ENCODE measurements at regions of chr5 and their contacts with region 1.

Region 1: GRCh38 chr5:57221049-57221568 is 47.2 kb downstream of the GPBP1 start:
- DNase-seq: peak in 1 of 2 donors; percentile 87
- ATAC-seq: peak; percentile 78 to 90 (median 87)
- H3K4me3 ChIP-seq: no peak overlapping the region
- H3K4me3 Mint-ChIP-seq: peak overlapping the region; percentile 56
- H3K27ac ChIP-seq: no peak overlapping the region
- H3K27ac Mint-ChIP-seq: peak overlapping the region; percentile 81 to 89
- H3K4me1 ChIP-seq: no peaks in the 10 kb centered on the region
- H3K4me1 Mint-ChIP-seq: peaks cover 26 to 28% of the 10 kb centered on the region in 2 donors
- H3K27me3 ChIP-seq: no peaks in the 10 kb centered on the region
- H3K27me3 Mint-ChIP-seq: no peaks in the 10 kb centered on the region
- CTCF ChIP-seq: peak; percentile 93

Region 2: GRCh38 chr5:56951946-56952691 is 269.0 kb before region 1 on chr5 and contains the start of gene MIER3:
- intact Hi-C with region 1: loop called (anchors 5 kb)
- DNase-seq: peak; percentile 80 to 86
- ATAC-seq: peak; percentile 94 to 97 (median 96)
- H3K4me3 ChIP-seq: peak within 1 kb of the TSS; percentile 56
- H3K4me3 Mint-ChIP-seq: peak within 1 kb of the TSS; percentile 87
- H3K27ac ChIP-seq: peak within 1 kb of the TSS; percentile 8
- H3K27ac Mint-ChIP-seq: peak within 1 kb of the TSS; percentile 74 to 80
- H3K4me1 ChIP-seq: peaks cover 13% of the 10 kb centered on the region
- H3K4me1 Mint-ChIP-seq: peaks cover 28 to 30% of the 10 kb centered on the region in 2 donors
- H3K27me3 ChIP-seq: peaks cover 15% of the 10 kb centered on the region
- H3K27me3 Mint-ChIP-seq: peaks cover 15 to 25% of the 10 kb centered on the region in 2 donors
- CTCF ChIP-seq: no peak
- total RNA-seq, gene MIER3: 20.4 to 30.8 (median 29.0) TPM

Region 3: GRCh38 chr5:57137401-57137800 is 83.7 kb before region 1 on chr5:
- intact Hi-C with region 1: loop called (anchors 2 kb)
- DNase-seq: no peak
- ATAC-seq: no peak
- H3K4me3 ChIP-seq: no peak overlapping the region
- H3K4me3 Mint-ChIP-seq: no peak overlapping the region
- H3K27ac ChIP-seq: no peak overlapping the region
- H3K27ac Mint-ChIP-seq: no peak overlapping the region
- H3K4me1 ChIP-seq: no peaks in the 10 kb centered on the region
- H3K4me1 Mint-ChIP-seq: no peaks in the 10 kb centered on the region
- H3K27me3 ChIP-seq: no peaks in the 10 kb centered on the region
- H3K27me3 Mint-ChIP-seq: peaks cover 0 to 5% of the 10 kb centered on the region in 2 donors
- CTCF ChIP-seq: no peak

Region 4: DNA sequence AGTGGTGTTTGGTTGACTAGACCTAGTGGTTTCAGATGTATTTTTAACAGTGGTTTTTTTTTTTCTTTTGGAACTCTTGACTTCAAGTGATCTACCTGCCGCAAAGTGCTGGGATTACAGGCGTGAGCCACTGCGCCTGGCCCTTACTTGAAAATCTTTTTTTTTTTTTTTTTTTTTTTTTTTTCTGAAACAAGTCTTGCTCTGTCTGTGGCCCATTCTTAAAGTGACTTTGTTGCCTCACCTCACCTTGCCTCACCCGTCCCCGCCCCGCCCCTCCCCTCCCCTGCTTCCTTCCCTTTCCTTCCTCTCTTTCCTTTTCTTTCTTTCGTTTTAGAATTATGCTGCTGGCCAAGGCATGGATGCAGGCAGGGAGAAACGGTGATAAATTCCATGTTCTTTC is 21.2 kb before region 1 on chr5:
- intact Hi-C with region 1: no loop called
- DNase-seq: no peak
- ATAC-seq: peak in 1 of 3 donors; percentile 7
- H3K4me3 ChIP-seq: no peak overlapping the region
- H3K4me3 Mint-ChIP-seq: peak overlapping the region; percentile 22
- H3K27ac ChIP-seq: no peak overlapping the region
- H3K27ac Mint-ChIP-seq: peak overlapping the region; percentile 10 to 56
- H3K4me1 ChIP-seq: peaks cover 21% of the 10 kb centered on the region
- H3K4me1 Mint-ChIP-seq: peaks cover 58 to 59% of the 10 kb centered on the region in 2 donors
- H3K27me3 ChIP-seq: no peaks in the 10 kb centered on the region
- H3K27me3 Mint-ChIP-seq: no peaks in the 10 kb centered on the region
- CTCF ChIP-seq: no peak

Measured in natural killer cell (primary cell).